GM23248 (cell line): ENCODE measurements at regions of chr17 and their contacts with region 1.

Region 1: DNA sequence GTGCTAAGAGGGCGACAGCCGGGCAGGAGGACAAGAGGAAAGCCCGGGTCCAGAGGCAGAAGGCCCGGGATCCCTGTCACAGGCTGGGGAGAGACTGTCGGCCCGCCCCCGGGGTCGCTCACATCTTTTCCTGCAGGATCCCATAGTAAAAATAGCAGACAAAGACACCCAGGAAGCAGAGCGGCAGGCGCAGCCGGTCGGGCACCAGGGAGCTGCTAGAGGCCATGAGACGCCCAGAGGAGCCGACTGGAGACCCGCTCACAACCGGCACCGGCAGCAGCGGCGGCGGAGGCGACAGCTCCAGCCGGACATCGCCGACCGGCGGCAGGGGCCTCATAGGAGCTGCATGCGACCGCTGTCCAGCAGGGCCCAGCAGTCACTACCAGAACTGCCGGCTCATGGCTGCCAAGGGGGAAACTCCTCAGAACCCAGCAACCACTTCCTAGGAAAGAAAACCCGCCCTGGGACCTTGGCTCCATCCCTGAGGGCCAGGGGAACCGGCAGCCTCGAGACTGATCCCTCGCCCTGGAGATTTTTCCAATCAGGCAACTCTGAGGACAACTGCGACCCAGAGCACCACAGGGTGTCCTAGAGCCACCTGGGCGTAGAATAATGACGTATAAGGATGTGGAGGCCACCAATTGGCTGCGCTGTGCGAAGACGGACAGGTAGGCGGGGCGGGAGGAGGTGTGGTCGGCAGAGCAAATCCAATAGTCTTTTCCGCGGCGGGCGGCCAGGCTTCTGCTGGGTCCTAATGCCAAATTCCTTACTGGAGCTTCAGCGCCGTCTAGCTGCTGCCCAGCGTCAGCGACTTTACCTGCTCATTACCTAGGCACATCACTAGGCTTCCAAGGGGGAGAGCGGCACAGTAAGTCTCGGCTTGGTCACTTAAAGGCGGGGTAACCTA is at the start of gene SLC35B1:
- DNase-seq: peak; percentile 99
- H3K4me3 ChIP-seq: peak within 1 kb of the TSS; percentile 99
- H3K27ac ChIP-seq: peak within 1 kb of the TSS; percentile 92
- H3K4me1 ChIP-seq: peaks cover 15% of the 10 kb centered on the region
- H3K27me3 ChIP-seq: no peaks in the 10 kb centered on the region
- total RNA-seq, gene SLC35B1: 38.3 and 71.7 TPM in 2 replicates

Region 2: DNA sequence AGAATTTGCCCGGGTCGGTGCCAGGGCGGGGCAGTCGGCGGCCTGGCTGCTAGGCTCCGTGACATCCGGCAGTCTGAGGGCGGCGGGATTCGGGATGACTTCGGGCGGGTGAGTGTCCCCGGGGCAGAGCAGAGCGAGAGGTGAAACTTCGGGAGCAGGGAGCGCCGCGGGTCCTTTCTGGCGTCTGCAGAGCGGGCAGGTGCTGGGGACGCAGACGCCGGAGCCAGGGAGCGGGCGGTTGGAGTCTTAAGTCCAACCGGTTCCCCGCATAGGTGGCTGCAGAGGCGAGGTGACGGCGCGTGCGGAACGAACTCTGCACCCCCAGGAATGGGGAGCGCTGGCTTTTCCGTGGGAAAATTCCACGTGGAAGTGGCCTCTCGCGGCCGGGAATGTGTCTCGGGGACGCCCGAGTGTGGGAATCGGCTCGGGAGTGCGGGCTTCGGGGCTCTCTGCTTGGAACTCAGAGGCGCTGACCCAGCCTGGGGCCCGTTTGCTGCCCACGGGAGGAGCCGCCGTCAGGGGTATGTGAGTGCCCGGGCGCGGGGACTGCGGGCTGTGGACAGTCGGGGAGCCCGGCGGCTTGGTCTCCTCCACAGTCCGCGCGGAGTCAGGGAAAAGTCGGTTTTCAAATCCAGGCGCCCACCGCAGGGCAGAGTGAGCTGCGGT is 575.0 kb before region 1 on chr17 and contains the start of gene B4GALNT2:
- in situ Hi-C with region 1: no loop called
- DNase-seq: peak; percentile 30
- H3K4me3 ChIP-seq: peak within 1 kb of the TSS; percentile 31
- H3K27ac ChIP-seq: no peak within 1 kb of the TSS
- H3K4me1 ChIP-seq: no peaks in the 10 kb centered on the region
- H3K27me3 ChIP-seq: peaks cover 26% of the 10 kb centered on the region
- total RNA-seq, gene B4GALNT2: not detected in 2 replicates

Region 3: DNA sequence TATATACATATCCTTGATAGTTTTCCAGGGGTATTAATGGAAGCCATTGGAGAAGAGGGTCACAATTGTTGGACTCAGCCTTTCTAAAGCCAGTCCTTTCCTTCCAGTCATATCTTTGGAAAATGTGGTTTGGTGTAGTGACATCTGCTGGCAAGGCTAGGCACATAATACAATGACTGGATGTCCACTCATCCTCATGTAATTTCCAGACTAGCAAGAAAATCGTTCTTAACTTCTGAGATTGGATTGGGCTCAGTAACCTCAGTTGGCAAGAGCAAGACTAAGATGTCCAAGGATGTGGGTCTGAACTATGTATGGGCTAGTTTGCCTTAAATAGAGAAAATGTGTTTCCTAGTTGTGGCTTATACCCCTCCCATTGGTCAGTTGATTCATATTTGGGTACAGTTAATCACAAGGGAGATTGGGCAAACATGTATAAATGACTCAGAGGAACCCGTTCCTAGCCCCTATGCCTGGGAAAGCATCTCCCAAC is 71.9 kb after region 1 on chr17:
- in situ Hi-C with region 1: loop called (anchors 5 kb)
- DNase-seq: peak; percentile 95
- H3K4me3 ChIP-seq: no peak overlapping the region
- H3K27ac ChIP-seq: peak overlapping the region; percentile 82
- H3K4me1 ChIP-seq: peaks cover 15% of the 10 kb centered on the region
- H3K27me3 ChIP-seq: no peaks in the 10 kb centered on the region

Region 4: GRCh38 chr17:49843774-49844350 is 136.0 kb after region 1 on chr17:
- in situ Hi-C with region 1: loop called (anchors 10 kb)
- DNase-seq: no peak
- H3K4me3 ChIP-seq: no peak overlapping the region
- H3K27ac ChIP-seq: no peak overlapping the region
- H3K4me1 ChIP-seq: peaks cover 7% of the 10 kb centered on the region; the same call in 1 of the 2 replicates
- H3K27me3 ChIP-seq: no peaks in the 10 kb centered on the region